ENCODE measurements at regions of chr6 and their contacts with region 1.

Region 1: GRCh38 chr6:57102976-57103375 is 13.0 kb downstream of the ZNF451 start:
- DNase-seq: no peak
- CTCF ChIP-seq: no peak

Region 2: DNA sequence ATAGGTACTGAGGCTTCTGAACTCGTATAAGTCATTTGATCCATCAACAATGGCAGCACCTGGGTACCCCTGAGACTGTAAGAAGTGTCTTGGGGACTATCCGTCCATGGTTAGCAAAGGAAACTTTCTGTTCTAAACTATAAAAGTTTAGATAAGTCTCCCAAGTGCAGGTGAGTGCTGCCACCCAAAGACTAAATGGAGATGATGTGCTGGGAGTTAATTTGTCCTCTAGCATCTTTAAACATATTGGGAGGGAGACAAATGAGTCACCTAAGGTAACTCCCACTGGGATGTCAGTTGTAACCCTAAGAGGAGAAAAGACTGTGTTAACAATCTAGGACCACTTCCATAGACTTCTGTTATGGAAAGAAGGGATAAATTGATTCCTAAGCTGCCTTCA is 141.8 kb before region 1 on chr6:
- CTCF ChIA-PET with region 1: no interaction called
- POLR2A ChIA-PET with region 1: no interaction called
- DNase-seq: no peak
- CTCF ChIP-seq: peak; percentile 8

Region 3: DNA sequence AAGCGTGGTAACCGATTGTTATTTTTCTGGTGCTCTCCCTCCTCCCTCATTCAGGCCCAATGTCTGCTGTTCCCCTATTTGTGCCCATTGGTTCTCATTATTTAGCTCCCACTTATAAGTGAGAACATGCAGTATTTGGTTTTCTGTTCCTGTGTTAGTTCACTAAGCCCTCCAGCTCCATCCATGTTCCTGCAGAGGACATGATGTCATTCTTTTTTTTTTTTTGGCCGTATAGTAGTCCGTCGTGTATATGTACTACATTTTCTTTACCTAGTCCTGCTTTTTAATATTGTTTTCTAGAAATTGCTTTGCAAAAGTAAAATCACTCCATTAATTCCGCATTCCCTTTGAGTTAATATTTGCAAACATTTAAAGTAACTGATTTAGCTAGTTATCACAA is 10.1 kb after region 1 on chr6:
- CTCF ChIA-PET with region 1: interaction called, 11 read pairs
- POLR2A ChIA-PET with region 1: interaction called, 6 read pairs
- DNase-seq: no peak
- CTCF ChIP-seq: no peak